MCF 10A (cell line): ENCODE measurements at regions of chr10 and their contacts with region 1.

Region 1: GRCh38 chr10:17290226-17290625 is 62.2 kb downstream of the VIM start:
- DNase-seq: peak; percentile 57
- H3K4me3 Mint-ChIP-seq: no peak overlapping the region
- H3K27ac Mint-ChIP-seq: no peak overlapping the region
- H3K4me1 Mint-ChIP-seq: peaks cover 5% of the 10 kb centered on the region
- H3K27me3 Mint-ChIP-seq: peaks cover 46% of the 10 kb centered on the region
- CTCF ChIP-seq: peak; percentile 66

Region 2: GRCh38 chr10:17278607-17279240 is 11.5 kb before region 1 on chr10:
- CTCF ChIA-PET with region 1: interaction called, 10 read pairs
- POLR2A ChIA-PET with region 1: no interaction called
- intact Hi-C with region 1: no loop called
- DNase-seq: peak; percentile 35
- H3K4me3 Mint-ChIP-seq: no peak overlapping the region
- H3K27ac Mint-ChIP-seq: no peak overlapping the region
- H3K4me1 Mint-ChIP-seq: peaks cover 4% of the 10 kb centered on the region
- H3K27me3 Mint-ChIP-seq: no peaks in the 10 kb centered on the region
- CTCF ChIP-seq: no peak

Region 3: DNA sequence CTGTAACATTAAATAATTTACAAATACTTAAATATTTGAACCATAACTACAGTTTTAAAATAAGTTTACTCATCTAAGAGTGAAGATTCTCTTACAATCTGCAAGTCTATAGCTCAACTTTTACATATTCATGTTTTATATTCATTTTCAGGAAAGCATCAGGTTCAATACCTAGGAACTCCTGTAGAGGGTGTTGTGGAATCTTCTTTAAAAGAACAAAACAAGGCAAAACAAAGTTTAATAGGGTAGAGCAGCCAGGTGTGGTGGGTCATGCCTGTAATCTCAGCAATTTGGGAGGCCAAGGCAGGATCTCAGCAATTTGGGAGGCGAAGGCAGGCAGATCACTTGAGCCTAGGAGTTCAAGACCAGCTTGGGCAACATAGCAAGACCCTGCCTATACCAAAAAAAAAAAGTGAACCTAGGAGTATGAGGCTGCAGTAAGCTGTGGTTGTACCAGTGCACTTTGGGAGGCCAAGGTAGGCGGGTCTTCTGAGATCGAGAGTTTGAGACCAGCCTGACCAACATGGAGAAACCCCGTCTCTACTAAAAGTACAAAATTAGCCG is 119.0 kb after region 1 on chr10:
- CTCF ChIA-PET with region 1: interaction called, 6 read pairs
- POLR2A ChIA-PET with region 1: no interaction called
- intact Hi-C with region 1: loop called (anchors 1 kb)
- DNase-seq: peak; percentile 33
- H3K4me3 Mint-ChIP-seq: no peak overlapping the region
- H3K27ac Mint-ChIP-seq: no peak overlapping the region
- H3K4me1 Mint-ChIP-seq: no peaks in the 10 kb centered on the region
- H3K27me3 Mint-ChIP-seq: no peaks in the 10 kb centered on the region
- CTCF ChIP-seq: peak; percentile 45

Region 4: DNA sequence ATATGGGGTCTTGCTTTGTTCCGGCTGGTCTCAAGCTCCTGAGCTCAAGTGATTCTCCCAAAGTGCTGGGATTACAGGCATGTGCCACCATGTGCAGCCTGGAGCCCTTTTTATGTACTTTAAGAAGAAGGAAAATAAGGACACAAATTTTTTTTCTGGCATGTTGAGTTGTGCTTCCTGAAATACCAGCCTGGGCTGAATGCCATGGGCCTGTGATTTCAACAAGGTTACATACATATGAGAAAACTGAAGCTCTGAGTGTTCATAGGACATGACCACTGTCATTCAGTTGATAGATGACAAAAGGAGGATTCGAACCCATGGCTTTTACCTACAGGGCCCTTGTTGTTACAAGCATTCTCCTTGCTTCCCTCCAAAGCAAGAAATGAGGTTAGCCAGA is 128.0 kb after region 1 on chr10:
- CTCF ChIA-PET with region 1: interaction called, 11 read pairs
- POLR2A ChIA-PET with region 1: no interaction called
- intact Hi-C with region 1: no loop called
- DNase-seq: no peak
- H3K4me3 Mint-ChIP-seq: no peak overlapping the region
- H3K27ac Mint-ChIP-seq: no peak overlapping the region
- H3K4me1 Mint-ChIP-seq: peaks cover under 1% of the 10 kb centered on the region
- H3K27me3 Mint-ChIP-seq: peaks cover 14% of the 10 kb centered on the region
- CTCF ChIP-seq: no peak

Region 5: GRCh38 chr10:17430647-17431355 is 140.6 kb after region 1 on chr10:
- CTCF ChIA-PET with region 1: interaction called, 94 read pairs
- POLR2A ChIA-PET with region 1: no interaction called
- intact Hi-C with region 1: loop called (anchors 1 kb)
- DNase-seq: peak; percentile 78
- H3K4me3 Mint-ChIP-seq: no peak overlapping the region
- H3K27ac Mint-ChIP-seq: no peak overlapping the region
- H3K4me1 Mint-ChIP-seq: peaks cover 5% of the 10 kb centered on the region
- H3K27me3 Mint-ChIP-seq: no peaks in the 10 kb centered on the region
- CTCF ChIP-seq: peak; percentile 81

Region 6: GRCh38 chr10:17438583-17438982 is 148.4 kb after region 1 on chr10:
- CTCF ChIA-PET with region 1: interaction called, 94 read pairs
- POLR2A ChIA-PET with region 1: no interaction called
- intact Hi-C with region 1: no loop called
- DNase-seq: no peak
- H3K4me3 Mint-ChIP-seq: no peak overlapping the region
- H3K27ac Mint-ChIP-seq: no peak overlapping the region
- H3K4me1 Mint-ChIP-seq: no peaks in the 10 kb centered on the region
- H3K27me3 Mint-ChIP-seq: no peaks in the 10 kb centered on the region
- CTCF ChIP-seq: no peak

Region 7: DNA sequence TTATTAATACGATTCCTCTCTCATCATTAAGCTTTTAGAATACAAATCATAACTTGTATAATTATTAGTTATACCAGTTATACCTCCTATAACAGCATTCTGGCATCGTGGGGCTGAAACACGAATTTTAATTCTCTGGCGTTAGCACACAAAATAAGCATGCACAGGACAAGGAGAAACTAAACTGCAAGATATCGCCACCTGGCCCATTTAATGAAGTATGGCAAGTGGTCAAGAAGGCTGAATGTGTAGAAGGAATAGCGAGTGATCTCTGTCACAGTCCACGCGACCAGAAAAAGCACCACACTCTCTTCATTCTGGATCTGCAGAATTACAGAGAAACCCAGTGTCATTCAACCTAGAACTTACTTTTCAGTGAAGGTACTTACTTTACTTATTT is 308.9 kb after region 1 on chr10:
- CTCF ChIA-PET with region 1: interaction called, 27 read pairs
- POLR2A ChIA-PET with region 1: no interaction called
- intact Hi-C with region 1: loop called (anchors 1 kb)
- DNase-seq: peak; percentile 53
- H3K4me3 Mint-ChIP-seq: no peak overlapping the region
- H3K27ac Mint-ChIP-seq: no peak overlapping the region
- H3K4me1 Mint-ChIP-seq: no peaks in the 10 kb centered on the region
- H3K27me3 Mint-ChIP-seq: no peaks in the 10 kb centered on the region
- CTCF ChIP-seq: peak; percentile 30